ENCODE measurements at regions of chr1 and their contacts with region 1.

Region 1: DNA sequence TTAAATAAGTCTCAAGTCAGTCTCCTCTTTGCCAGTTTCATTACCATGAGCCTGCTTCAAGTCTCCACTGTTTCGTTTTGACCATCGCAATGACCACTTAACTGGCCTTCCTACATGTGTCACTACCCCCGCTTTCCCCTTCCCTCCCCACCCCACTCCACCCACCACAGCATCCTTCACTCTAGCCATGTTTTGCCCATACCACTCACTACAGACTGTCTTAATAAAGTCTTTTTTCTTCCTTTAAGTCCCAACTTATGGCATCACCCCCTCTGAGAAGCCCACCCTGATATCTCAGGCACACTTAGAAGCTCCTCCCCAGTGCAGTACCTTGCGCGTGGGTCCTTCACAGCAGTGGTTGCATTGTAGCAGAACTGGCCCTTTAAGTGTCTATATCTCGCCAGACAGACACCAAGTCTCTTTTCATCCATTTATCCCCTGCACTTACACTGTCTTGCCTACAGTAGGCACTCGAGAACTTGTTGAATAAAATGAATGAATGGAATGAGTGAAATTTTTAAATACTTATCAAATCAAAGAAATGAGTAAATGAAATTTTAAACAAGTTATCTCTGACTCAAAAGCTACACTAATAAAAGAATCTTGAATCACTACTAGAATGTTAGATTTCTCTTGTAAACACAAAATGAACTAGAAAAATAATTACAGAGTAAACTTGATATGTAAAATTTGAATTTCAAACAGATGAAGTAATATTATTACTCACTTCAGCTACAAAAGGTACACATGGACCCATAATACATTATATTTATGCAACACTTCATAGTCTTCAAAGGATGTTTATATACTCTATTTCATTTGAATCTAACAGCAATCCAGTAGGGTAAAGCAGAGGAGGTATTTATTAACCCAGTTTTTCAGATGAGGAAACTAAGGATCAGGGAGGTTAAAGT is 54.8 kb upstream of the MAN1A2 start:
- DNase-seq: no peak
- ATAC-seq: peak; percentile 71

Region 2: DNA sequence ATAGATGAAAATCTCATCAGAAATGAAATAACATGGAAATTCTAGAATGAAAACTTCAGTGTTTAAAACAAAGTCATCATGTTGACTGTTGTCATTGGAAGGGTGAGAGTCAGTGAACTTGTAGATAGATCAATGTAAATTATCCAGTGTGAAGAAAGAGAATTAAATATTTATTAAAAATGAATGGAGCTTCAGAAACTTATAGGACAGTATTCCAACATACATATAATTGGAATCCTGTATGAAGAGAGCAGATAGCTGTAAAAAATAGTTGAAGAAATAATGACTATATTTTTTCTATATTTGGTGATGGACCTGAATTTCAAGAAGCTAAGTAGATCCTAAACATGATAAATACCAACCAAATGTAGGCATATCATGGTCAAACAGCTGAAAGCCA is 114.8 kb after region 1 on chr1:
- intact Hi-C with region 1: loop called in 1 of 2 experiments (anchors 10 kb)
- DNase-seq: no peak
- ATAC-seq: no peak

Measured in left colon (tissue), 2 donors.